ENCODE measurements at regions of chr20 and their contacts with region 1.

Region 1: DNA sequence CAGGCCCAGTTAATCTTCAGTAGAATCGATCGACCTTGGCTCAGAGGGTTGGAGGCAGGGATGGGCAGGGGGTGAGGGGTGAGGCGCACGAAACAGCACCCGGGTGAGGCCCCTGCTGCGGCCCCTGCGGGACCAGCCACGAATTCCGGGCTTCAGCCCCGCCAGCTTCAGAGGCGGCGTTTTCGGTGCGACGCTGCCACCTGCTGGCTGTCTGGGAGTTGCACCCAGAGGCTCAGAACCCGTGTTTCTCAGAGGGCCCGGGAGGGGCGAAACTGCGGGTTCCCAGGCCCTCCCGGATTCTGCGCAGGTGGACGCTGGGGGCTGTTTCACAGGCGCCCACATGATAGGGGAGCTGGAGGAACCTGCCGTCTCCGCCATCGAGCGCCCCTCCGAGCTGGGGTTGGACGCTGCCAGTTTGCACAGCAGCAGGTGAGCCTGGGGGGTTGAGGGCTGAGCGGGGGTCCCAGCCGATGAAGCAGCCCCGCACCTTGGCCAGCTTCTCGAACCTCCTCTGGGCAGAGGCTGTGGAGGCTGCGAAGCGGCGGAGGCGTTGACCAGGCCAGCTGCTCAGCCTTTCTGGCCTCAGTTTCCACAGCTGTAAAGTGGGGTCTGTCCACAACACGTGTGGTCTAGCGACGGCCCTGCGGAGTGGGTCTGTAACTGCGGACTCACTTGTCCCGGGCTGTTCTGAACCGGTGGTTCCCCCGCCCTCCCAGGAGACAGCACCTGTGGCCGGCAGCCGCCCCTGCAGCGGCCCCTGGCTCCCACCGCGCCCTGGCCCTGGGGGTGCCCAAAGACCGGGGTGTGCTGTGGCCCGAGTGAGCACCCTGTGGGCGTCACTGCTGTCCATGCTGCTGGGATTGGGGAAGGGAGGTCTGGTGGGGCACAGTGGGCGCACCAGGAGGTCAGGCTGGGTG is 2.5 kb upstream of the BHLHE23 start:
- DNase-seq: peak; percentile 78 to 93 (median 85)
- ATAC-seq: peak; percentile 63
- H3K4me3 ChIP-seq: peak overlapping the region; percentile 54 to 55
- H3K4me3 Mint-ChIP-seq: peak overlapping the region; percentile 88
- H3K27ac ChIP-seq: no peak overlapping the region
- H3K27ac Mint-ChIP-seq: no peak overlapping the region
- H3K4me1 ChIP-seq: peaks cover 53% of the 10 kb centered on the region
- H3K4me1 Mint-ChIP-seq: peaks cover 25% of the 10 kb centered on the region
- H3K27me3 ChIP-seq: peaks cover 33 to 45% of the 10 kb centered on the region in 2 experiments
- H3K27me3 Mint-ChIP-seq: peaks cover 23% of the 10 kb centered on the region
- CTCF ChIP-seq: peak; percentile 91

Region 2: DNA sequence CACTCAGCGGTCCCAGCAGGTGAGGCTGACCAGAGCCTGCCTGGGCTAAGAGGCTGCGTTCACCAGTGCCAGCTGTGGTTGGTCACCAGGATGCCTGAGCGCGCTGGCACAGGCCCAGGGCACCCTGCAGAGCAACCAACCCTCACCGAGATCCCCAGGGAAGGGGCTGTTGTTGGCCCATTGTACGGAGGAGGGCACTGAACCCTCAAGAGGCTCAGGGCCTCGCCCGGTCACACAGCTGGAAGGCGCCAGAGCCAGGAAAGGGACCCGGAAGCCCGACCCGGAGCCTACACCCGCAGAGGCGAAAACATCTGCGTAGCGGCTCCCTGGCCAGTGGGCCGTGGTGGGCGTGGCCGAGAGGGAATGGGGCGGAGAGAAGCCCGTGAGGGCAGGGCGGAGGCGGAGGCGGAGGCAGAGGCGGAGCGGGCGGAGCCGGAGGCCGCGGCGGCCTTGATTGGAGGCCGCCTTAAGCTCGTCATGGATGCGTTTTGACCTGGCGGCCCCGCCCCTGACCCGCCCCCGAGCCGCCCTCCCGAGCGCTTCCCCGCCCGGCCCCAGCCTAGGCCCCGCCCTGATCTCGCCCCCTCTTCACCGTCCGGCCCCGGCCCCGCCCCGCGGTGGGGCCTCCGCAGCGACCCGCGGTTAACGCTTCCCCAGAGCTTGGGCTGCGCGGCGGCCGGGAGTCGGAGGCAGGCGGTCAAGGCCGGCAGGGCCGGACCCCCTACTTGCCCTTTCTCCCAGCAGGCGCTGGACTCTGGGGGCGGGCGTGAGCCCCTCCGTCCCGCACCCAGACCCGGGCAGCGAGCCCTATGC is 215.2 kb before region 1 on chr20:
- CTCF ChIA-PET with region 1: no interaction called
- POLR2A ChIA-PET with region 1: no interaction called
- intact Hi-C with region 1: no loop called
- DNase-seq: peak; percentile 89 to 99 (median 94)
- ATAC-seq: peak; percentile 76
- H3K4me3 ChIP-seq: peak overlapping the region; percentile 69 to 84
- H3K4me3 Mint-ChIP-seq: peak overlapping the region; percentile 89
- H3K27ac ChIP-seq: peak overlapping the region; percentile 75 to 95
- H3K27ac Mint-ChIP-seq: peak overlapping the region; percentile 93
- H3K4me1 ChIP-seq: peaks cover 38% of the 10 kb centered on the region
- H3K4me1 Mint-ChIP-seq: peaks cover 30% of the 10 kb centered on the region
- H3K27me3 ChIP-seq: no peaks in the 10 kb centered on the region
- H3K27me3 Mint-ChIP-seq: no peaks in the 10 kb centered on the region
- CTCF ChIP-seq: no peak

Region 3: GRCh38 chr20:62855120-62855519 is 154.2 kb before region 1 on chr20:
- CTCF ChIA-PET with region 1: no interaction called
- POLR2A ChIA-PET with region 1: no interaction called
- intact Hi-C with region 1: no loop called
- DNase-seq: no peak
- ATAC-seq: no peak
- H3K4me3 ChIP-seq: no peak overlapping the region
- H3K4me3 Mint-ChIP-seq: no peak overlapping the region
- H3K27ac ChIP-seq: no peak overlapping the region
- H3K27ac Mint-ChIP-seq: no peak overlapping the region
- H3K4me1 ChIP-seq: peaks cover 5% of the 10 kb centered on the region
- H3K4me1 Mint-ChIP-seq: peaks cover 11% of the 10 kb centered on the region
- H3K27me3 ChIP-seq: no peaks in the 10 kb centered on the region
- H3K27me3 Mint-ChIP-seq: no peaks in the 10 kb centered on the region
- CTCF ChIP-seq: no peak

Region 4: GRCh38 chr20:62875419-62876361 is 133.6 kb before region 1 on chr20:
- CTCF ChIA-PET with region 1: interaction called, 20 read pairs
- POLR2A ChIA-PET with region 1: no interaction called
- intact Hi-C with region 1: loop called in 1 of 2 experiments (anchors 1 kb)
- DNase-seq: peak in 1 of 9 experiments; percentile 36
- ATAC-seq: peak; percentile 20
- H3K4me3 ChIP-seq: no peak overlapping the region
- H3K4me3 Mint-ChIP-seq: no peak overlapping the region
- H3K27ac ChIP-seq: no peak overlapping the region
- H3K27ac Mint-ChIP-seq: no peak overlapping the region
- H3K4me1 ChIP-seq: peaks cover 8% of the 10 kb centered on the region
- H3K4me1 Mint-ChIP-seq: peaks cover 25% of the 10 kb centered on the region
- H3K27me3 ChIP-seq: no peaks in the 10 kb centered on the region
- H3K27me3 Mint-ChIP-seq: no peaks in the 10 kb centered on the region
- CTCF ChIP-seq: no peak

Region 5: DNA sequence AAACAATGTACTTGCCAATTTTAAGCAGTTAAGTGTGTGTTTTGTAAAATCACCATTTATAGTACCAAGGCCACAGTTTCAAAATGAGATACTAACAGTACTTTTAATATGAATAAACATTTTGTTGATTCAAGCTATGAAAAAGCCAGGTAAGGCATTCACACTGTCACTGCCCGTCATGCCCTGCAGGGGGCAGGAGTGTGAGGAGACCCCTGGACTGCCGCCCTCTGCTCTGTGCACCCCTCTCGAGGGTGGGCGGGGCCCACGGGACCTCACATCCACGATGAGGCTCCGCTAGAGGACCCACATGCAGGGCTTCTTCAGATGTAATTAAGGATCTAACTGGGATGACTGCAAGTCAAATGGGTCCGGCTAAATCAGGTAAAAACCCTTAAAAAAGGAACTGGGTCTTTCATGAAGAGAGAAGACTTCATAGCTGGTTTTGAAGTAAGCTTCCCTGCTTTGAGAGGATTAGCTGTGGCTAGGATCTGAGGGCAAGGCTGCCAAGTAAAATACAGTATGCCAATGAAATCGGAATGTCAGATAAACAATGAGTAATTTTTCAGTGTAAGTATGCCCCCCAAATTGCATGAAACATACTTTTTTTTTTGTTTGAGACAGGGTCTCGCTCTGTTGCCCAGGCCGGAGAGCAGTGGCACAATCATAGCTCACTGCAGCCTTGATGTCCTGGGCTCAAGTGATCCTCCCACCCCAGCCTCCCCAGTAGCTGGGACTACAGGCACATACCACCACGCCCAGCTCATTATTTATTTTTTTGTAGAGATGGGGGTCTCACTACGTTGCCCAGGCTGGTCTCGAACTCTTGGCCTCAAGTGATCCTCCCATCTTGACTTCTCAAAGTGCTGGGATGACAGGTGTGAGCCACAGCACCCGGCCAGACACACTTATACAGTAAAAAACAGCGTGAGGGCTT is 101.7 kb before region 1 on chr20:
- CTCF ChIA-PET with region 1: interaction called, 60 read pairs
- POLR2A ChIA-PET with region 1: no interaction called
- intact Hi-C with region 1: no loop called
- DNase-seq: peak in 4 of 9 experiments; percentile 60 to 74 (median 63)
- ATAC-seq: peak; percentile 96
- H3K4me3 ChIP-seq: no peak overlapping the region
- H3K4me3 Mint-ChIP-seq: no peak overlapping the region
- H3K27ac ChIP-seq: no peak overlapping the region
- H3K27ac Mint-ChIP-seq: peak overlapping the region; percentile 37
- H3K4me1 ChIP-seq: peaks cover 7% of the 10 kb centered on the region
- H3K4me1 Mint-ChIP-seq: peaks cover 28% of the 10 kb centered on the region
- H3K27me3 ChIP-seq: no peaks in the 10 kb centered on the region
- H3K27me3 Mint-ChIP-seq: no peaks in the 10 kb centered on the region
- CTCF ChIP-seq: peak; percentile 70

Region 6: DNA sequence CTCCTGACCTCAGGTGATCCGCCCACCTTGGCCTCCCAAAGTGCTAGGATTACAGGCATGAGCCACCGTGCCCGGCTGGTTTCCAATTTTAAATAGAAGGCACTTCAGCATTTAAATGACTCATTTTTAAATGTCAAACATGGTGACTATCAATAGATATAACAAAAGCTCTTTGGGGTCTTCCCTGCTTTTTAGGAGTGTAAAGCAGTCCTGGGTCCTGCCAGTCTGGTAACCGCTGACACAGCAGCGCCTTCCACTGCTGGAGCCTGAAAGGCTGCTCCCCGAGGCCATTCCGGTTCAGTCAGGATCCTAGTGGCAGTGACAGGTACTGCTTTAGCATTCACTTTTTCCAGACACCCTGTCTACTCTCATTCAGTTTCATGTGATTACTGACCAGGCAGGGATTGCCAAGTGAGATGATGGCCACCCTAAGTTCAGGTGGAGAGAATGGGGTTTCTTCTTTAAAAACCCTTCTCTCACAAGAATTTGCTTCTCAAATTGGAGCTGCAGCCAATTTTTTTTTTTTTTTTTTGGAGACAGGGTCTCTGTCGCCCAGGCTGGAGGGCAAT is 88.1 kb before region 1 on chr20:
- CTCF ChIA-PET with region 1: interaction called, 10 read pairs
- POLR2A ChIA-PET with region 1: interaction called, 4 read pairs
- intact Hi-C with region 1: loop called in 1 of 2 experiments (anchors 5 kb)
- DNase-seq: peak; percentile 20 to 85 (median 65)
- ATAC-seq: peak; percentile 66
- H3K4me3 ChIP-seq: peak overlapping the region in 1 of 2 experiments; percentile 18
- H3K4me3 Mint-ChIP-seq: peak overlapping the region; percentile 83
- H3K27ac ChIP-seq: peak overlapping the region in 1 of 2 experiments; percentile 62
- H3K27ac Mint-ChIP-seq: peak overlapping the region; percentile 89
- H3K4me1 ChIP-seq: peaks cover 89% of the 10 kb centered on the region
- H3K4me1 Mint-ChIP-seq: peaks cover 82% of the 10 kb centered on the region
- H3K27me3 ChIP-seq: no peaks in the 10 kb centered on the region
- H3K27me3 Mint-ChIP-seq: no peaks in the 10 kb centered on the region
- CTCF ChIP-seq: peak; percentile 80

Region 7: GRCh38 chr20:63206904-63207303 is 197.6 kb after region 1 on chr20:
- CTCF ChIA-PET with region 1: no interaction called
- POLR2A ChIA-PET with region 1: no interaction called
- intact Hi-C with region 1: no loop called
- DNase-seq: no peak
- ATAC-seq: no peak
- H3K4me3 ChIP-seq: no peak overlapping the region
- H3K4me3 Mint-ChIP-seq: no peak overlapping the region
- H3K27ac ChIP-seq: no peak overlapping the region
- H3K27ac Mint-ChIP-seq: peak overlapping the region; percentile 22
- H3K4me1 ChIP-seq: peaks cover 13% of the 10 kb centered on the region
- H3K4me1 Mint-ChIP-seq: peaks cover 43% of the 10 kb centered on the region
- H3K27me3 ChIP-seq: no peaks in the 10 kb centered on the region
- H3K27me3 Mint-ChIP-seq: no peaks in the 10 kb centered on the region
- CTCF ChIP-seq: no peak

Measured in CD8-positive, alpha-beta T cell (primary cell).